PC-9 (cell line): ENCODE measurements at regions of chr7 and their contacts with region 1.

Region 1: GRCh38 chr7:138935465-138936011 is 45.7 kb downstream of the KIAA1549 start:
- DNase-seq: peak; percentile 73 to 85
- H3K4me3 ChIP-seq: no peak overlapping the region; the same call in 1 of the 2 replicates
- H3K27ac ChIP-seq: peak overlapping the region; percentile 72
- H3K4me1 ChIP-seq: peaks cover 27% of the 10 kb centered on the region
- H3K27me3 ChIP-seq: no peaks in the 10 kb centered on the region
- CTCF ChIP-seq: no peak

Region 2: DNA sequence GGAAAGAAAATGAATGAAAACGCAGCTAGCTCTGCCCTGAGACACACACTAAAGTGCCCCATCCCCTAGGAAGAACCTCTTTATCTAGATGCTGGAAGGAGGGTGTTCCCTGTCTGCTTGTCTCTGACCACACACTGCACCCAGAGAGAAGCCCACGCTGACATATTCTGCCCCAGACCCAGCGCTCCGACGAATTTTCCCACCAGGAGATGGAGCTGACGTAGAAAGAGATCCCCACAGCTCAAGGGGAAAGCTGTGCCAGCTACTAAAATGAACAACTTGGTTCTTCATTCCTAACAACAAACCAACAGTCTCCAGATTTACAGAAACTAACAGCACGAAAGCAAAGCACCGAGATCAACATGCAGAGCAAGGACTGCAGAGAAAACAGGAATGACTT is 27.7 kb before region 1 on chr7:
- CTCF ChIA-PET with region 1: no interaction called
- POLR2A ChIA-PET with region 1: interaction called, 11 read pairs
- intact Hi-C with region 1: no loop called
- DNase-seq: no peak
- H3K4me3 ChIP-seq: no peak overlapping the region
- H3K27ac ChIP-seq: no peak overlapping the region
- H3K4me1 ChIP-seq: no peaks in the 10 kb centered on the region
- H3K27me3 ChIP-seq: no peaks in the 10 kb centered on the region
- CTCF ChIP-seq: no peak

Region 3: GRCh38 chr7:138957753-138958648 is 22.5 kb after region 1 on chr7:
- CTCF ChIA-PET with region 1: no interaction called
- POLR2A ChIA-PET with region 1: no interaction called
- intact Hi-C with region 1: loop called (anchors 1 kb)
- DNase-seq: no peak
- H3K4me3 ChIP-seq: no peak overlapping the region
- H3K27ac ChIP-seq: peak overlapping the region; percentile 42
- H3K4me1 ChIP-seq: peaks cover 21% of the 10 kb centered on the region
- H3K27me3 ChIP-seq: no peaks in the 10 kb centered on the region
- CTCF ChIP-seq: no peak

Region 4: DNA sequence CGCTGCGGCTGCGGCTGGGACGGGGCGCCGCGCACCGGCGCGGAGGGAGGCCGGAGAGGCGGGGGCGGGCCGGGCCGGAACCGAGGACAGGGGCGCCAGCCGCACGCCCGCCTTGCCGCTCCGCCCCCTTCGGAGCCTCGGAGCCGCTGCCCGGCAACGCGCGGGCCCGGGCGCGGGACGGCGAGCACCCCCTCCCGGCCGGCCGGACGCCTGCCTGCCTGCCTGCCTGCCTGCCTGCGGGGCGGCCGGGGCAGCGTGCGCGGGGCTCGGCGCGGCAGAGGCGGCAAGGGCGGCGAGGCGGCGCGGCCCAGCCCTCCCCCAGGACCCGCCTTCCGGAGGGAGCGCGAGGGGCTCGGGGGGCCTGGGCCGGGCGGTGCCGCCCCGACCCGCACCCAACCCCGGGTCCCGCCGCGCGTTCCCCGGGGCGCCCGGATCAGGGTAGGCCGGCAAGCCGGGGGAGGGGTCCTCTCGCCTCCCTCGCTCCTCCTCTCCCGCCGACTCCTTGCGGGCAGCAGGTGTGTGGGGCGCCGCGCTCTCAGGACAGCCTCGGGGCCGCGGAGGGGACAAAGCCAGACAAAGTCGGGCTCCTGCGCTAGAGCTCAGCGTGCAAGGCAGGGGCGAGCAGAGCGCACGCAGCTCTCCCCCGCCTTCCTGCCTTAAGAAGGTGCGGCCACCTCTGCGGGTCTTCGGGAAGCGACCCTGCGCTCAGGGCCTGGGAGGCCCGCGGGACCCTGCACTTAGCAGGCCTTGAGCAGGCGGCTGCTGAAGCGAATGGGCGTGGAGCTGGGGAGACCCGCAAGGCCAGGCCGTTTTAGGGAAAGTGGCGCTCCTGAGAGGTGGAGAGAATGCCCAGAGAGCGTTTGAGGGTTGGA is 46.0 kb after region 1 on chr7 and contains the start of gene KIAA1549:
- CTCF ChIA-PET with region 1: no interaction called
- POLR2A ChIA-PET with region 1: no interaction called
- intact Hi-C with region 1: loop called (anchors 5 kb)
- DNase-seq: peak in 1 of 2 experiments; percentile 78
- H3K4me3 ChIP-seq: peak within 1 kb of the TSS; percentile 73
- H3K27ac ChIP-seq: no peak within 1 kb of the TSS
- H3K4me1 ChIP-seq: peaks cover 34% of the 10 kb centered on the region
- H3K27me3 ChIP-seq: no peaks in the 10 kb centered on the region
- CTCF ChIP-seq: no peak
- total RNA-seq, gene KIAA1549: 20.2 and 26.6 TPM in 2 replicates

Region 5: GRCh38 chr7:139152149-139152548 is 216.6 kb after region 1 on chr7:
- CTCF ChIA-PET with region 1: no interaction called
- POLR2A ChIA-PET with region 1: no interaction called
- intact Hi-C with region 1: no loop called
- DNase-seq: no peak
- H3K4me3 ChIP-seq: no peak overlapping the region
- H3K27ac ChIP-seq: no peak overlapping the region
- H3K4me1 ChIP-seq: 0 out of 2 replicates have a peak, but pooled peaks cover 6% of the 10 kb centered on the region
- H3K27me3 ChIP-seq: no peaks in the 10 kb centered on the region
- CTCF ChIP-seq: no peak